ENCODE measurements at regions of chr2 and their contacts with region 1.

Region 1: GRCh38 chr2:148509288-148509902 is 135.2 kb upstream of the EPC2 start:
- DNase-seq: peak; percentile 97
- H3K4me3 Mint-ChIP-seq: peak overlapping the region; percentile 60
- H3K27ac Mint-ChIP-seq: peak overlapping the region; percentile 70
- H3K4me1 Mint-ChIP-seq: peaks cover 29% of the 10 kb centered on the region
- H3K27me3 Mint-ChIP-seq: no peaks in the 10 kb centered on the region

Region 2: GRCh38 chr2:147937744-147938349 is 571.5 kb before region 1 on chr2:
- CTCF ChIA-PET with region 1: interaction called, 18 read pairs
- intact Hi-C with region 1: loop called (anchors 1 kb)
- DNase-seq: no peak
- H3K4me3 Mint-ChIP-seq: no peak overlapping the region
- H3K27ac Mint-ChIP-seq: no peak overlapping the region
- H3K4me1 Mint-ChIP-seq: no peaks in the 10 kb centered on the region
- H3K27me3 Mint-ChIP-seq: no peaks in the 10 kb centered on the region

Region 3: GRCh38 chr2:148020111-148021058 is 489.0 kb before region 1 on chr2 and contains the start of gene ORC4:
- CTCF ChIA-PET with region 1: interaction called, 4 read pairs
- intact Hi-C with region 1: loop called (anchors 1 kb)
- DNase-seq: peak; percentile 99
- H3K4me3 Mint-ChIP-seq: peak within 1 kb of the TSS; percentile 100
- H3K27ac Mint-ChIP-seq: peak within 1 kb of the TSS; percentile 96
- H3K4me1 Mint-ChIP-seq: peaks cover 44% of the 10 kb centered on the region
- H3K27me3 Mint-ChIP-seq: no peaks in the 10 kb centered on the region
- total RNA-seq, gene ORC4: 35.9 to 38.8 TPM

Region 4: DNA sequence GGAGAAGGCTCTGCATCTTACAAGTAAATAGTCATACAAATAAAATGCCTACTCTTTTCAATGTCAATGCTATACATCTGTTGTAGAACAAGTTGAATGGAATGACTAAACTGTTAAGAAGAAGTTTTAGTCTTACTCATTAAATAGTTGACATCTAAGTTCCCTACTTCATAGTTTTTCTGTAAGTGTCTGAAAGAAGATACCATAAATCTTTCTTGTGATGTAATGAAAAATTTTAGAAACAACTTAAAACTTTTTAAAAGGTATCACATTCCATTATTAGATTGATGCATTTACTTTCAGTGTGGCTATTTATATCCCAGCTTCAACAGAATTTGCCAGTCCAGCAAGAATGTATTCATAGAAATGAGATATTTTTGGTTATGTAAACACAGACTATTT is 50.0 kb before region 1 on chr2:
- CTCF ChIA-PET with region 1: no interaction called
- intact Hi-C with region 1: loop called (anchors 1 kb)
- DNase-seq: no peak
- H3K4me3 Mint-ChIP-seq: no peak overlapping the region
- H3K27ac Mint-ChIP-seq: no peak overlapping the region
- H3K4me1 Mint-ChIP-seq: no peaks in the 10 kb centered on the region
- H3K27me3 Mint-ChIP-seq: no peaks in the 10 kb centered on the region

Region 5: DNA sequence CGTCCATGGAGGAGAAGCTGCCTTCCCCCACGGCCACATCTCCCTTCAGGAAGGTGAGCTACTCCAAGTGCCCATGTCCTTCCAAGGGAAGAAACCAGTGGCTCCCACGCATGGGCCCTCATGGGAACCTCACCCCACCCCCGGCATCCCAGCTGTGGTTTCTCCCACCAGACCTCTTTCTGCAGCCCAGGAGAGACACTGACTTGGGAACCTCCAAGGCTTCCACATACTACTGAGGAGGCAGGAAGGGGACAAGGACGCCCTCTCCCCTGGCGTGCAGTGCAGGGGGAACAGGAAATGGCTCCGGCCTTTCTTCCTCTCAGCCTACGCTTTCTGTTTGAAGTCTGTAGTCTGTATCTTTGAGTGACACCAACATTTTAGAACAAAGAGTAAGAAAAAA is 30.6 kb after region 1 on chr2:
- CTCF ChIA-PET with region 1: interaction called, 10 read pairs
- intact Hi-C with region 1: no loop called
- DNase-seq: peak; percentile 66
- H3K4me3 Mint-ChIP-seq: peak overlapping the region; percentile 2
- H3K27ac Mint-ChIP-seq: peak overlapping the region; percentile 79
- H3K4me1 Mint-ChIP-seq: peaks cover 46% of the 10 kb centered on the region
- H3K27me3 Mint-ChIP-seq: no peaks in the 10 kb centered on the region

Measured in activated naive CD4-positive, alpha-beta T cell treated with anti-CD3 and anti-CD28 coated beads for 36 hours (primary cell).